Cardiac septum (tissue), 1 donor: ENCODE measurements at regions of chr10 and their contacts with region 1.

Region 1: GRCh38 chr10:117216611-117217195 is 19.4 kb downstream of the KCNK18 start:
- DNase-seq: peak; percentile 87

Region 2: DNA sequence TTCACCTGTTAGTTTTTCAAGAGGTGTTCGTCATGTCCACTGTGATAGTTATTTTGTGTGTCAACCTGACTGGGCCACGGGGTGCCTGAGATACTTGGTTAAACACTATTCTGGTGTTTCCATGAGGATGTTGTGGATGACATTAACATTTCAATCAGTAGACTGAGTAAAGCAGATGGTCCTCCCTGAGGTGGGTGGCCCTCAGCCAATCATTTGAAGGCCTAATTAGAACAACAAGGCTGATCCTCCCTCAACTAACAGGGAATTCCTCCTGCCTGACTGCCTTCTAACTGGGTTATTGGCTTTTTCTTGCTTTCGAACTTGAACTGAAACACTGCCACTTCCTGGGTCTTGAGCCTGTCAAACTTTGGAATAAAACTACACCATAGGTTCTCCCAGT is 291.6 kb before region 1 on chr10:
- intact Hi-C with region 1: no loop called
- DNase-seq: no peak

Region 3: GRCh38 chr10:117318909-117319308 is 102.2 kb after region 1 on chr10:
- intact Hi-C with region 1: loop called (anchors 2 kb)
- DNase-seq: no peak

Region 4: GRCh38 chr10:117442944-117443685 is 226.4 kb after region 1 on chr10:
- intact Hi-C with region 1: loop called (anchors 10 kb)
- DNase-seq: peak; percentile 90